Calu3 (cell line): ENCODE measurements at regions of chr14 and their contacts with region 1.

Region 1: DNA sequence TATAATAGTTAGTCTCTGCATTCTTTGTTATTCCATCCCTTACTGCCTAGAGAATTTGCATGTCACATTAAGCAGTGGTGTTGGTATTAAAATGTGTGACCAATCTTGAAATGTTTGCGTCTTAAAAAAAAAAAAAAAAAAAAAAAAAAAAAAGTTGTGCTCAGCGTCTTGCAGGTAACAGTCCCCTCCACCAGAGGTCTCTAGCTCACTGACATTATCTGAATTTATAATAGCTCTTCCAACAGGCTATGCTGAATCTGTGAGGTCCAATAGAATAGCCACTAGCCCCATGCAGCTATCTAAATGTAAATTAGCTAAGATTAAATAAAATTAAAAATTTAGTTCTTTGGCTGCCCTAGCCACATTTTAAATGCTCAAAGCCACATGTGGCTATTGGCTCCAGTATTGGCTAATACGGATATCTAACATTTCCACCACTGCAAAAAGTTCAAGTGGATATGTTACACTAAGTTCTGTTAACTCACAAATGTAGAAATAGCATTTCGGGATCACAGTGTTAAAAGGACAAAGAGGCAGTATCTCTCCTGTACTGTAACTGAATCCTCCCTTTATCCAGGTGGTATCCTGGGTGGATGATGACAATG is 28.7 kb downstream of the NKX2-8 start:
- DNase-seq: peak; percentile 32
- H3K4me3 Mint-ChIP-seq: no peak overlapping the region
- H3K27ac Mint-ChIP-seq: no peak overlapping the region
- H3K4me1 Mint-ChIP-seq: no peaks in the 10 kb centered on the region
- H3K27me3 Mint-ChIP-seq: no peaks in the 10 kb centered on the region
- CTCF ChIP-seq: peak; percentile 51

Region 2: GRCh38 chr14:35963209-35963608 is 590.5 kb before region 1 on chr14:
- CTCF ChIA-PET with region 1: no interaction called
- intact Hi-C with region 1: loop called (anchors 5 kb)
- DNase-seq: peak; percentile 16
- H3K4me3 Mint-ChIP-seq: no peak overlapping the region
- H3K27ac Mint-ChIP-seq: no peak overlapping the region
- H3K4me1 Mint-ChIP-seq: peaks cover 14% of the 10 kb centered on the region
- H3K27me3 Mint-ChIP-seq: no peaks in the 10 kb centered on the region
- CTCF ChIP-seq: no peak

Region 3: DNA sequence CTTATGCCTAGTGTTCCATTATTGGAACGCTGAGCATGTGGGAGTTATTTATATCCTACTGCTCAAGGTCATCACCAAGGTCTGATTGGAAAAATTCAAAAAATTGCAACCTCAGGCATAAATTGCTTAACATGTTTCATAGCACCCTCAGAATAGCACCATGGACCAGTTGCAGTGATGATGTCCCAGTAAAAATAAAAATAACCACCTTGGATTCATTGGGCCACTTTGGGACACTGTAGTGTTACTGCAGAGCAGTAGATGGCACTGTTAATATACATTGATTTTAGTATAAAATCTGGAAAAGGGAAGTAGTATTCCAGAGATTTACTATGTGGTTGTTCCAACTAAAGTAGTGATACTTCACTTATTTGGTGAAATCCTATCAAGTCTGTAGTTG is 346.3 kb before region 1 on chr14:
- CTCF ChIA-PET with region 1: no interaction called
- intact Hi-C with region 1: loop called (anchors 5 kb)
- DNase-seq: no peak
- H3K4me3 Mint-ChIP-seq: no peak overlapping the region
- H3K27ac Mint-ChIP-seq: no peak overlapping the region
- H3K4me1 Mint-ChIP-seq: no peaks in the 10 kb centered on the region
- H3K27me3 Mint-ChIP-seq: no peaks in the 10 kb centered on the region
- CTCF ChIP-seq: peak; percentile 12

Region 4: GRCh38 chr14:36845356-36846012 is 291.7 kb after region 1 on chr14:
- CTCF ChIA-PET with region 1: no interaction called
- intact Hi-C with region 1: no loop called
- DNase-seq: no peak
- H3K4me3 Mint-ChIP-seq: no peak overlapping the region
- H3K27ac Mint-ChIP-seq: no peak overlapping the region
- H3K4me1 Mint-ChIP-seq: peaks cover 10% of the 10 kb centered on the region
- H3K27me3 Mint-ChIP-seq: peaks cover 7% of the 10 kb centered on the region
- CTCF ChIP-seq: no peak

Region 5: DNA sequence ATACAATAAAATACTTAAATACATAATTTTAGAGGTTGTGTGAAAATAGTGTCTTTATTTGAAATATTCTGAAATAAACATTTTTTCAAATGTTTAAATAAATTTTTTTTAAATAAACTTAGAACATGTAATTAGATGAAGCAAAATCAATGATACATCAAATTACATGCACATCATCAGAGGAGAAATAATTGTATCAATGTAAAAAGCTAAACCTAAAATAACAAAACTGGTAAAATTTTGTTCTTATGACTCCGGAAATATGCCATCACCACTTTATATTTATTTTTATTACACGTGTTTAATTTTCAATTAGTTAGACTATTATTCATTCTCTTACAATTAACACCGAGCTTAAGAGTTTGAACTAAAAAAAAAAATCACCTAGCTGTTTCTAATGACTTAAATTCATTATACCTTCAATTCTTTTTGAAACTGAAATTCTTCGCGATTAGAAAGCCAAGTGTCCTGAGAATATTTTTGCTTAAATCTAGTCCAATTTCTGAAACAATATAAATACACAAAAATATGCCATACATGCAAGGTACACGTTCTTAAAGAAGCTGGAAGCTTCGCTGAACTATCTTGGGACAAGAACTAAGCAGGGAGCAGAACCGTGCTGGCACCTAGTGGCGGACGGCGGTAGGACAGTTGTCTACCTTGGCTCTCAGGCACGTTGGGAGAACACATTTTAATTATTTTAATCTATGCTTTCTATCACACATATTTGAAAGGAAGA is 388.2 kb after region 1 on chr14:
- CTCF ChIA-PET with region 1: no interaction called
- intact Hi-C with region 1: loop called (anchors 5 kb)
- DNase-seq: peak; percentile 84
- H3K4me3 Mint-ChIP-seq: no peak overlapping the region
- H3K27ac Mint-ChIP-seq: no peak overlapping the region
- H3K4me1 Mint-ChIP-seq: peaks cover 8% of the 10 kb centered on the region
- H3K27me3 Mint-ChIP-seq: no peaks in the 10 kb centered on the region
- CTCF ChIP-seq: peak; percentile 80

Region 6: GRCh38 chr14:38000340-38000739 is 1446.6 kb after region 1 on chr14:
- CTCF ChIA-PET with region 1: interaction called, 14 read pairs
- intact Hi-C with region 1: no loop called
- DNase-seq: no peak
- H3K4me3 Mint-ChIP-seq: no peak overlapping the region
- H3K27ac Mint-ChIP-seq: no peak overlapping the region
- H3K4me1 Mint-ChIP-seq: no peaks in the 10 kb centered on the region
- H3K27me3 Mint-ChIP-seq: peaks cover 13% of the 10 kb centered on the region
- CTCF ChIP-seq: no peak